ENCODE measurements at regions of chr22 and their contacts with region 1.

Region 1: DNA sequence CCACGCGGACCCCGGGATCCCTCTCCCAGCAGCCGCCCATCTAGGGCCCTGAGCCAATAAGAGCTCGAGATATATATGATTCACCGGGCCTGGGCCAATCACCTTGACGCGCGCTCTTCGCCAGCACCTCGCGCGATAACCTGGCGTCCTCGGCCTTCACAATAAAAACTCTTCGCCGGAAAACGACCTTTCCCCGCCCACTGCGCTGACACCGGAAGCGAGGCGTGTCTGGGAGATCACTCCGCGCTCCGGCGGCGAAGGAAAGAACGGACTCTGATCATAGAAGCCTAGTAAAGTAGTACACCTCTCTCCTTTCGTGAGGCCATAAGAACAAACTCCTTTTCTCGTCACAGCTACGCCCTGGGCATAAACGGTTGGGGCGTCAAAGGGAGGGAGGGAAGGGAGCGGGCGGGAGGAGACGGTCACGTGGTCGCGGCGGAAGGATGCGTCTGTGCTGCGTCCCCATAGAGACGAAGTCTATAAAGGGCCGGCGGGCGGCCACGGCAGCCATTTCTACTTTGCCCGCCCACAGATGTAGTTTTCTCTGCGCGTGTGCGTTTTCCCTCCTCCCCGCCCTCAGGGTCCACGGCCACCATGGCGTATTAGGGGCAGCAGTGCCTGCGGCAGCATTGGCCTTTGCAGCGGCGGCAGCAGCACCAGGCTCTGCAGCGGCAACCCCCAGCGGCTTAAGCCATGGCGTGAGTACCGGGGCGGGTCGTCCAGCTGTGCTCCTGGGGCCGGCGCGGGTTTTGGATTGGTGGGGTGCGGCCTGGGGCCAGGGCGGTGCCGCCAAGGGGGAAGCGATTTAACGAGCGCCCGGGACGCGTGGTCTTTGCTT is at the start of gene ATF4:
- DNase-seq: peak; percentile 99
- H3K4me3 ChIP-seq: peak within 1 kb of the TSS; percentile 100
- CTCF ChIP-seq: no peak
- POLR2A ChIP-seq: peak in 1 of 2 donors; percentile 98
- total RNA-seq, gene ATF4: 214 to 336 (median 309) TPM

Region 2: DNA sequence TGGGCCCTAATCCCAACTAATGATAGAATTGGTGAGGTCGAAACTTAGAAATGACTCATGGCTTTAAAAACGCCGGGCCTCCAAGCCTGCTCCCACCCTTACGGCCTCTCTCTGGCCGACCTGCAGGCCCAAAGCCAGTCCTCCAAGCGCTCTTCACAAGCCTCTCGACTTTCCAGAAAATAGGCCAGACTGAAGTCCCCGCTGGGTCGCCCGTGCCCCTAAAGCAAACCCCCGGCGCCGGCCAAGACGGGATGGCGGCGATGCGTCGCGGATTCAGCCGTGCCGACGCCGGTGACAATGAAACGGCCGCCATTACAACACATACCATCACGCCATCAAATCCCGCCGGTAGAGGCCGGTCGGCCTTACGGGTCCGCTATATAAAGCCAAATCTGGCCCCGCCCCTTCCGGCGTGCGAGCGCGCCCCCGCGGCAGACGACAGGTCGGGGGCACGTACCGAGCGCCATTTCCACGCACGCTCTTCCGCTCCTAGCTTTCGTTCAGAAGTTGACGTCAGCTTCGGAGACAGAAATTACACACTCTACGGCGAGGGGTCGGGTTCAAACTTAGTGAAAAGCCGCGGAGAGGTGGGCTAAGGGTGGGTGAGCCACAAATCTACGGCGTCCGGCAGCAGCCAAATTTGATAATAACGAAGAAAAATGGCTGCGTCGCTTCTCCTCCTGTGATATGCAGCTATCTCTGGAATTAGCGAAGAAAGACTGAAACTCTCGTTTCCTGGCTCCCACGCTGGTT is 200.8 kb before region 1 on chr22 and contains the start of gene RPL3:
- intact Hi-C with region 1: loop called (anchors 10 kb)
- DNase-seq: peak; percentile 95 to 99
- H3K4me3 ChIP-seq: peak within 1 kb of the TSS; percentile 69
- CTCF ChIP-seq: no peak
- POLR2A ChIP-seq: peak in 1 of 2 donors; percentile 97
- total RNA-seq, gene RPL3: 2,414 to 3,362 (median 2,993) TPM

Region 3: GRCh38 chr22:39343259-39344048 is 176.8 kb before region 1 on chr22:
- intact Hi-C with region 1: loop called (anchors 10 kb)
- DNase-seq: peak in 1 of 2 donors; percentile 55
- H3K4me3 ChIP-seq: no peak overlapping the region
- CTCF ChIP-seq: peak in 1 of 3 donors; percentile 48
- POLR2A ChIP-seq: no peak

Region 4: DNA sequence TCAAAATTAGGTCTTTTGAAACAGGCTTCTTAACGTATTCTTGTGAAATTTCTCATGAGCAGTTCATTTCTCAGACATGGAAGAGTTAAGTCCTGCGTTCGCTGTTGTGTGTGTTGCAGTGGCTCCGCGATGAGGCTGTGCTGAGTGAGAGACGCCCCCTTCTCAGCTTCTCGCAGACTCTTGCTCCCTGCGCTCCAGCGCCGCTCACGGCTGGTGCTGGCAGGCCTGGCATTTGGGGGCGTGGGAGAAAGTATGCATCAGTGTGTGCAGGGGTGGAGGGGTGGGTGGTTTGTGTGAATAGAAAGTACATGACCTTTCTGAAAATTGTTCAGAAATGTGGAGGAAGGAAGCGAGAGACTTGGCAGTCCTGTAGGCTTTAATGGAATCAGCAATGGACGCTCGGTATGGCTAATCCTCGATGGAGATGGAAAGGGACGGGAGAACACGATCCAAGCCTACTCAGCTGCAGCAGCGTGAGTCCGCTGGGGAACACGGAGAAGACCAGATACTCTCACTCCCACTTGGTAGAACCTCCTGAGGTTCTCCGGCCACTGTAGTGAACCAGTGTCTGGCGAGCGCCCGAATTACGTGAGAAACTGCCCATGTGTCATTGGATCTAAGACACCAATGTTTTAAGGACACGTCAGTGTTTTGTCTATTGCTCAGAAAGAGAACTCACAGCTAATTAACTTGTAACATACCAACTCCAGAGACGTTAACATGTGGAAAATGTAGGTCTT is 114.8 kb before region 1 on chr22:
- intact Hi-C with region 1: loop called (anchors 10 kb)
- DNase-seq: no peak
- H3K4me3 ChIP-seq: no peak overlapping the region
- CTCF ChIP-seq: no peak
- POLR2A ChIP-seq: no peak

Region 5: DNA sequence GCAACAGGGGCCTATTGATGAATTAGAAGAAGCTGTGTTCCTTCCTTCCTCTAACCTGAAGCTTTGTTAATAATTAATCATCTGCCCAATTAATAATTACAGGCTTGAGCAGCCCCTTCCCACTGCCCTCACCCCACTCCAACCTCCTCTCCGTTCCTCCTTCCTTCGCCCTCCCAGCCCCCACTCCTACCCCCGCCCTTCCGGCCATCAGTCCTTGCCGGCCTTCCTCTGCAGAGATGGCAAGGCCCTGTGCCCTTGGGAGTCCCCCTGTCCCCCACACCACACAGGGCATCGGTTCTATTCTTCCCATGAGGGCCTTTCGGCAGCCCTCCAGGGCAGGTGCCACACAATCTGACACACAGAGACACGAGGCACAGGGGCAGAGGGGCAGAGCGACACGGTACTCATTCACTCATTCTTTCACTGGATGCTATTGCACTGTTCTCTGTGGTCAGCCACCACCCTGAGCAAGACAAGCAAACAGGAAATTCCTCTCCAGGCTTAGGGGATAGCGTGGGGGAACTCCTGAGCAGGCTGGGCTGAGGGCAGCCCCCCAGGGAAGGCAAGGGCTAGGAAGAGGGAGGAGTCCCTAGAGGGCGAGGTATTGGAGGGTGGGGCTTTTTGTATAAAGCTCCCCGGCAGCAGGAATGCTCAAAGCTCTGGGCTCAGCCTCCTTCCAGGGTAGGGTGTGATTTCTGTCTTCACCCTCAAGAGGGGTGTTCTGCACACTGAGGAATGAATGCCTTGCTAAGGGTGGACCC is 48.7 kb before region 1 on chr22:
- intact Hi-C with region 1: no loop called
- DNase-seq: no peak
- H3K4me3 ChIP-seq: no peak overlapping the region
- CTCF ChIP-seq: no peak
- POLR2A ChIP-seq: no peak